ENCODE measurements at regions of chr1 and their contacts with region 1.

Region 1: DNA sequence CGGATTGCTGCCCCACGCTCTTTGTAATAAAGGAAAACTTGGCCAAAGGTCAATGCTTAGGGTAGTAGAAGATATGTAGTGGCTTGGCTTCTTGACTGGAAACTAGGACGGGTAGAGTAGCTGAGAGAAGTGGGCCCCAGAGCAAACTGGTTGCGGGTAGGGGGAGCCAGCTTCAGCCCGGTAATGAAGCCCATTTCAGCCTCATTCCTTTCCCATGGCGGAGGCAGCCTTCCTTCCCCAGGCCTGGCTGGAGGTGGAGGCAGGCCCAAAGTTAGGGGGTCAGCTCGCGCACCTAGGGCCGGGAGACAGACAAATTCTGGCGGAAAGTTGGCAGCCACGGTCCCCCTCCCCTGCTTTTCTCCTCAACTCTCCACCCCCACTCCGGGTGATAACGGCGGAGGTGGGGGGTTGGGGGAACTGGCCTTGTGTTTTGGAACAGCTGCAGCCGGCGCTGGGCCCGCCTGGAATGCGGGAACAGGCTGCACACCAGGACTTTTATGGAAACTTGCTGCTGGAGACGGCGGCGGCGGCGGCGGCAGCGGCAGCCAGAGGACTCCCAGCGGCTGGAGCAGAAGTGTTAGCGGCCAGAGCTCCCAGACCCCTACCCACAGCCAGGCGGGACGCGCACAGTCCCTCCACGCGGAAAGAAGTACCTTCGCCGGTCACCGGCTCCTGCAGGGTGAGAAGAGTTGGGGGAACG is at the start of gene NEXN:
- DNase-seq: peak; percentile 85 to 94 (median 90)
- ATAC-seq: peak; percentile 86 to 93 (median 88)
- H3K4me3 ChIP-seq: peak within 1 kb of the TSS; percentile 61 to 89 (median 80)
- H3K27ac ChIP-seq: peak within 1 kb of the TSS; percentile 89 to 100 (median 97)
- H3K4me1 ChIP-seq: peaks cover 0 to 14% (median 2%) of the 10 kb centered on the region in 12 donors
- H3K27me3 ChIP-seq: peaks cover 0 to 3% (median 0%) of the 10 kb centered on the region in 9 donors
- CTCF ChIP-seq: no peak
- POLR2A ChIP-seq: peak in 1 of 2 donors; percentile 77
- total RNA-seq, gene NEXN: 224 to 470 (median 363) TPM

Region 2: GRCh38 chr1:77794550-77794949 is 93.7 kb before region 1 on chr1:
- intact Hi-C with region 1: no loop called
- DNase-seq: no peak
- ATAC-seq: no peak
- H3K4me3 ChIP-seq: no peak overlapping the region
- H3K27ac ChIP-seq: no peak overlapping the region
- H3K4me1 ChIP-seq: no peaks in the 10 kb centered on the region
- H3K27me3 ChIP-seq: no peaks in the 10 kb centered on the region
- CTCF ChIP-seq: no peak
- POLR2A ChIP-seq: no peak

Region 3: GRCh38 chr1:77832901-77833300 is 55.3 kb before region 1 on chr1:
- intact Hi-C with region 1: loop called (anchors 1 to 10 kb)
- DNase-seq: peak in 2 of 5 donors; percentile 18 to 40
- ATAC-seq: peak; percentile 81 to 94 (median 84)
- H3K4me3 ChIP-seq: peak overlapping the region in 1 of 12 donors; percentile 1
- H3K27ac ChIP-seq: peak overlapping the region; percentile 86 to 98 (median 90)
- H3K4me1 ChIP-seq: peaks cover 5 to 74% (median 52%) of the 10 kb centered on the region in 12 donors
- H3K27me3 ChIP-seq: no peaks in the 10 kb centered on the region
- CTCF ChIP-seq: no peak
- POLR2A ChIP-seq: no peak

Region 4: DNA sequence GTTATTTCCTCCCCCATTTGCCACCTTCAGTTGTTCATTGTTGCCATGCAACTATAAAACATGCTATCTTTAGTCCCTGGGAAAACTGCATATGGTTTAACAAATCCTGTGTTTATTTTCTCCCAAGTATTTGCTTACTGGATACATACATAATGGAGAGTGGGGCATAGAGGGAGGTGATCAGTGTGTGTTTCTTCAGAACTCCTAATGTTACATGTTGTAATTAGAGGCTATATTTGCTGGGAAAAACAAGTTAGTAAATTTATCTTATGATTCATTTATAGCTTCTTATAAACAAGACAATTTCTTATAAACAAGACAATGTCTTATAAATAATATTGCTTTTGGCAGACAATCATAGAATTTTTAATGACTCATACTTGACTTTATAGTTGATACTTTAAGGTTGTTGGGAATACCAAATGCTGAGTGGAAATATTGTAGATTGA is 150.3 kb after region 1 on chr1:
- intact Hi-C with region 1: no loop called
- DNase-seq: no peak
- ATAC-seq: no peak
- H3K4me3 ChIP-seq: no peak overlapping the region
- H3K27ac ChIP-seq: no peak overlapping the region
- H3K4me1 ChIP-seq: peaks cover 0 to 16% (median 0%) of the 10 kb centered on the region in 12 donors
- H3K27me3 ChIP-seq: no peaks in the 10 kb centered on the region
- CTCF ChIP-seq: no peak
- POLR2A ChIP-seq: no peak

Region 5: DNA sequence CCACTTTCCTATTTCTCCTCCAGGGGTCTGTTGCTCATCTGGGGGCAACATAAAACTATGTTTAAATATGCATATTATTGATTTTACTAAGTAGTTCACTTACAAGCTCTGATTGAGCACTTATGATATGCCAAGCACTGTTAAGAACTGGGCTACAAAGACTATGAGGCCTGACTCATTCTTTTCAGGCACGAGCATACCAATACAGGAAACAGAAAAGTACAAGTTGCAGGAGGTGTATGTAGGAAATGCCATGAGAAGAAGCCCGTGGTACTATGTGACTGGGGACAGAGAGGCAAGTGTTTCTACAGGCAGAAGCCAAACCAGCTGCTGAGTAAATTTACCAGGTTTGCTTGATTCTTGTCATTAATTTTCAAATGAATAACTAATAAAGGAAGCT is 482.1 kb after region 1 on chr1:
- intact Hi-C with region 1: no loop called
- DNase-seq: no peak
- ATAC-seq: no peak
- H3K4me3 ChIP-seq: no peak overlapping the region
- H3K27ac ChIP-seq: no peak overlapping the region
- H3K4me1 ChIP-seq: no peaks in the 10 kb centered on the region
- H3K27me3 ChIP-seq: no peaks in the 10 kb centered on the region
- CTCF ChIP-seq: no peak
- POLR2A ChIP-seq: no peak

Measured in heart left ventricle (tissue), 16 donors.